ENCODE measurements at regions of chr19 and their contacts with region 1.

Region 1: DNA sequence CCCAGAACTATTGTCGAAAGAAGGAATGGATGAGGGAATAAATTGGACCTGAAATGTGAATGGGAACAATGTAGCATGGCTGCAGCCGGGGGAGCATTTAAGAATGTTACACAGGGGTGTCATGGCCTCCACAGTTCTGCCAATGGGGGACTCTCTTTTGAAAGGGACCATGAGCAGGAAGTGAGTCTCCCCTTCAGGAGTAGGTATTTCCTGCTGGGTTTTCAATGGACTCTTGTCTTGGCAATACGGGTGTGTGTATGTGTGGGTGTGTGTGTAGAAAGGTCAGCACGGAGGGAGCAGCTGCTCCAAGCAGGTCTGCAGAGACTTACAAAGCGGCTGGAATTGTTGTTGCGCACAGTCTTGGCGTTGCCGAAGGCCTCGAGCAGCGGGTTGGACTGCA is 24.4 kb downstream of the MYO1F start:
- DNase-seq: peak; percentile 62
- ATAC-seq: peak; percentile 63; the same call in 1 of the 2 replicates
- H3K4me3 ChIP-seq: no peak overlapping the region
- H3K27ac ChIP-seq: no peak overlapping the region
- H3K4me1 ChIP-seq: no peaks in the 10 kb centered on the region
- H3K27me3 ChIP-seq: no peaks in the 10 kb centered on the region
- CTCF ChIP-seq: no peak
- POLR2A ChIP-seq: no peak
- RAD21 ChIP-seq: no peak

Region 2: DNA sequence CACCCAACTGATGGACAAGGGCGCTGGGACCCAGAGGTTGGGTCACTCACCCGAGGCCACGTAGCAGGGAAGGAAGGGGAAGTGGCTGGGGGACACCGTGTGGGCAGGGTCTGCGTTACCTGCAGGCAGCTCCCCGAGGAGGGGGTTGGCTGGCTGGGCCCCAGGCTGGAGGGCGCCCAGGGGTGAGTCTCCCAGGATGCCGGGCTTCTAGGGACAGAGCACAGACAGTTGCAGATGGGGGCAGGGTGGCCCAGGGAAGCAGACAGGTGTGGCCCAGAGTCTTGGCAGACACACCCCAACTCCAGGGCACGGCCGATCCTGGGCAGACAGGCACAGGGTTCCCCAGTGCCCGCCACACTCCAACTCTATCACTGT is 1768.6 kb after region 1 on chr19:
- CTCF ChIA-PET with region 1: no interaction called
- POLR2A ChIA-PET with region 1: interaction called, 20 read pairs
- dilution Hi-C with region 1: no loop called
- in situ Hi-C with region 1: no loop called
- intact Hi-C with region 1: no loop called
- DNase-seq: no peak
- ATAC-seq: no peak
- H3K4me3 ChIP-seq: no peak overlapping the region
- H3K27ac ChIP-seq: no peak overlapping the region
- H3K4me1 ChIP-seq: no peaks in the 10 kb centered on the region
- H3K27me3 ChIP-seq: no peaks in the 10 kb centered on the region
- CTCF ChIP-seq: no peak
- POLR2A ChIP-seq: no peak
- RAD21 ChIP-seq: no peak

Measured in IMR-90 (cell line).